ENCODE measurements at regions of chrX and their contacts with region 1.

Region 1: DNA sequence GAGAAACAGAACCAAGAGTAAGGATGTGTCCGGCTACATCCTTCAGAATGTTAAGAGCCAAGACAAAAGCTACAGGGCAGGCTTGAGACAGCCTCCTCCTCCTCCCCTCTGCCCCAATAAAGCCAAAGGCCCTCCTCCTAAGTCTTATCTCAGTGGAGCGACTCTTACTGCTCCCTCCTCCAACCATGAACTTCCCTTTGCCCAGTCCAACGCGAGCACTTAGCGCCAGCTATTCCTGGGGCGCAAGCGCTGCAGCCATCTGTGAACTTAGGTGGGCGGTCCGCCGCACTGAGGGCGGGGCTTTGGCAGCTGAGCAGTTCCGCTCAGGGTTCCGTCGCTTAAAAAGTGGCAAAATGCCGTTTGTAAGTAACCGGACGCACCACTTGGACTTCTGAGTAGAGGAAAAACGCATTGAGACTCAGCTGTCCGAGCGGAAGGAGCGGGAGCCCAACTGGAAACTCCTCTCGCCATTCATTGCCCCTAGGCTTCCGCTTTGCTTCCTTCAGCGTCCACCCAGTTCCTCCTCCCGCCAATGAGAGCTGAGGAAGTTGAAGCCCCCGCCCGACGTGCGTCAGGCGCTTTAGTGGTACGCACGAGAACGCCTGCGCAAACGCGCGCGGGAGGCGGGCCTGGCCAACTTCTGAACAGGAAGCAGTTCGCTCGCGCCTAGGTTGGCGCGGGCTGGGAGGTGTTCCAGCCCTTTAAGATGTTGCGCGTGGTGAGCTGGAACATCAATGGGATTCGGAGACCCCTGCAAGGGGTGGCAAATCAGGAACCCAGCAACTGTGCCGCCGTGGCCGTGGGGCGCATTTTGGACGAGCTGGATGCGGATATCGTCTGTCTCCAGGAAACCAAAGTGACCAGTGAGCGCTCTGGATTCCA is at the start of gene APEX2:
- DNase-seq: peak; percentile 83 to 96
- ATAC-seq: peak; percentile 98 to 99
- H3K4me3 ChIP-seq: peak within 1 kb of the TSS; percentile 63
- H3K27ac ChIP-seq: peak within 1 kb of the TSS; percentile 82 to 96
- H3K4me1 ChIP-seq: peaks cover 5% of the 10 kb centered on the region; the same call in 2 of the 3 replicates
- CTCF ChIP-seq: no peak
- EP300 ChIP-seq: no peak
- POLR2A ChIP-seq: peak; percentile 89
- RAD21 ChIP-seq: no peak
- polyA plus RNA-seq, gene APEX2: 37.3 and 37.8 TPM in 2 replicates

Region 2: DNA sequence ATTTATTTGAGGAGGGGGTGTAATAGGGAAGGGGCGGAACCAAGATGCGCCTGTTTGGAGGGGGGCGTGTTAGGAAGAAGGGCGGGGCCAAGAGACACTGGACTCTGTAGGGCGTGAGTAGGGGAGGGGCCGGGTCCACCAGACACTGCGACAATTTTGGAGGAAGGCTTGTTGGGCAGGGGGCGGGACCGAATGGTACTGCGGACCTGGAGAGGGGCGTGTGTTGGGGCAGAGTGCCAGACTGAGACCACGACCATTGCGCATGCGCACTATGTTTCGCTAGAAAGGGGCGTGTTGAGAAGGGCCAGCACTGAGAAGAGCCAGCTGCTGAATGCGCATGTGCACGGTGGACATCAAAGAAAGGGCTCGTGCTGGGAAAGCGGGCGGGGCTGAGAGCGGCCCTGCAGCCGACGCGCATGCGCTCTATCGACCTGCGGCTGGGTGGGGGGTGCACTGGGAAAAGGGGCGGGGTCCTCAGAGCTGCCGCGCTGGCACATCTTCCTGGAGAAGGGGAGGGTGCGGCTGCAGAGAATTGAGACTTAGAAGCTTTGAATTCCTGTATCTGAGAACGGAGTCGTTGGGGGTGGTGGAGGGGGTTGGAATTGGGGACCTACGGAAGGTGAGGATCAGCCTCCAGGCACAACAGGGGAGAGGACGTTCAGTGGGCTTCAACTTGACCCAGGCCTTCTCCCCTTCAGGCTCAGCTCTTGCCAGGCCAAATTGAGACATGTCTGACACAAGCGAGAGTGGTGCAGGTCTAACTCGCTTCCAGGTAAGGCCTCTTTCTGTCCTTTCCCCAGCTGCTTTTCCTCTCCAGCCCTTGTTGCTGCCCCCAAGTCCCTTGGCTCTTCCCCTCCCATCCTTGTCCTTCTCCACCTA is 191.1 kb before region 1 on chrX:
- CTCF ChIA-PET with region 1: no interaction called
- POLR2A ChIA-PET with region 1: interaction called, 14 read pairs
- DNase-seq: peak; percentile 89 to 97
- ATAC-seq: peak; percentile 82 to 90
- H3K4me3 ChIP-seq: peak overlapping the region; percentile 92
- H3K27ac ChIP-seq: peak overlapping the region; percentile 81 to 90
- H3K4me1 ChIP-seq: peaks cover 9% of the 10 kb centered on the region; the same call in 2 of the 3 replicates
- CTCF ChIP-seq: no peak
- EP300 ChIP-seq: no peak
- POLR2A ChIP-seq: no peak
- RAD21 ChIP-seq: no peak